Esophagus muscularis mucosa (tissue), 4 donors: ENCODE measurements at regions of chr1 and their contacts with region 1.

Region 1: GRCh38 chr1:156583821-156584622 is 4.5 kb downstream of the TTC24 start:
- DNase-seq: no peak
- H3K4me3 ChIP-seq: no peak overlapping the region
- H3K27ac ChIP-seq: no peak overlapping the region
- H3K4me1 ChIP-seq: peaks cover 0 to 8% (median 6%) of the 10 kb centered on the region in 4 donors
- H3K27me3 ChIP-seq: no peaks in the 10 kb centered on the region
- CTCF ChIP-seq: peak; percentile 94 to 97 (median 95)
- EP300 ChIP-seq: no peak
- POLR2A ChIP-seq: no peak

Region 2: DNA sequence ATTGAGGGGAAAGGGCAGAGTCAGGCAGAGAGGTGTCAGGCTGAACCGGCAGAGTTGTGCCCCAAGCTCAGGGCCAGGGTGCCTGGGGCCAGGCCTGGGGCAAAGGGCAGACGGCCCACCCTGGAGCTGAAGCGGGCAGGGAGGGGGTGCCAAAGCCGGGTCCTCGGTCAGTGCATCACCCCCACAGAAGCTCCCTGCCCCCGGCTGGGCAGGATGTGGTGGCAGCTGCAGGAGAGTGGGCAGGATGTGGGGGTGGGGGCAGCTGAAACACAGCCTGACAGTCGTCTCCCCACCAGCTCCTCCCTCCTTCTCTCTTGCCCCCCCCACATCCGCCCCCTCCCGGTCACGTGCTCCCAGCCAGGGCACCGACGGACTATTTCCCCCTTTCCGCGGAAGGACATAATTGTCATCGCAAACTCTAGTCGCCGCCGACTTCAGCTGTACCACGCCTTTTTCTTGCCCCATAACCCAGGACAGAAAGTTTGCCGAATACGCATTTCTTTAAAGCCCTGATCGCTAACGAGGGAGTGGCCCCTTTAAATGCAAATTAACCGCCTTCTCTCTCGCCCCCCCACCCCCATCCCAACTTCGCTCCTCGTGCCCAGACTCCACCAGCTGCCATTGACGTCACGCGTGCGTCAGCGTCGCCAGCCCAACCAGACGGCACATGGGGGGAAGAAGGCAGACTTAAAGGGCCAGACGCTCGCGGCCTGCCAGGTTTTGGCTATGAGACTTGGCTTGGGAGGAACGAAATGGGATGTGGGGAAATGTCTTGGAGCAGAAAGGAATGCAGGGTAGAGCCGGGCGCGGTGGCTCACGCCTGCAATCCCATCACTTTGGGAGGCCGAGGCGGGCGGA is 79.0 kb before region 1 on chr1:
- intact Hi-C with region 1: no loop called
- DNase-seq: peak; percentile 100
- H3K4me3 ChIP-seq: peak overlapping the region; percentile 42 to 56 (median 44)
- H3K27ac ChIP-seq: peak overlapping the region; percentile 98 to 100 (median 99)
- H3K4me1 ChIP-seq: peaks cover 63 to 83% (median 79%) of the 10 kb centered on the region in 4 donors
- H3K27me3 ChIP-seq: no peaks in the 10 kb centered on the region
- CTCF ChIP-seq: peak in 1 of 3 experiments; percentile 7
- EP300 ChIP-seq: peak; percentile 97
- POLR2A ChIP-seq: peak; percentile 71

Region 3: DNA sequence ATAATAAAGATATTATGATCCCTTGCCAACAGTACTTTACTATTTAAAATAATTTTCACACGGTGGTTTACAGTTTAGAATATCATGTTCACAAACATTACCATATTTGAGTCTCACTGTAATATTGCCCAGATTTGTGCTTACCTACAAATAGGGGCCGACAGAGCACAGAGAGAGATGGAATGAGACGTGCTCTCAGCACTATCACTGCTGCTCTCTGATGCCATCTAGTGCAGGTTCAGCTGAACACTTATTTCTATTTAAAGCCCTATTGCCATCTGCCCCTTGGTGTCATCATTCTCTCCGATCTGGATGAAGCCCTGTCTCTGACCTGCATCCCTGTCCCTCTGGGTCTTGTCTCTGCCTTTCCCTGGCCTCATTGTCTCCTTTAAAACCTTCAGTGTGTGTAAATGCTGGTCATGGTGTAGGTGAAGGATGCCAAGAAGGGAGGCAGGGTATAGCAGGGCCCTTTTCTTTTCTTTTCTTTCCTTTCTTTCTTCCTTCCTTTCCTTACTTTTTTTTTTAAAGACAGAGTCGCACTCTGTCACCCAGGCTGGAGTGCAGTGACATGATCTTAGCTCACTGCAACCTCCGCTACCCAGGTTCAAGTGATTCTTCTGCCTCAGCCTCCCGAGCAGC is 24.1 kb after region 1 on chr1:
- intact Hi-C with region 1: loop called (anchors 2 kb)
- DNase-seq: no peak
- H3K4me3 ChIP-seq: no peak overlapping the region
- H3K27ac ChIP-seq: peak overlapping the region in 1 of 4 donors; percentile 64
- H3K4me1 ChIP-seq: peaks cover 0 to 15% (median 8%) of the 10 kb centered on the region in 4 donors
- H3K27me3 ChIP-seq: no peaks in the 10 kb centered on the region
- CTCF ChIP-seq: peak; percentile 63 to 88 (median 85)
- EP300 ChIP-seq: no peak
- POLR2A ChIP-seq: no peak